ENCODE measurements at regions of chr14 and their contacts with region 1.

Region 1: GRCh38 chr14:49633640-49634546 is 1.2 kb downstream of the DNAAF2 start:
- DNase-seq: peak; percentile 94 to 96
- H3K4me3 ChIP-seq: peak overlapping the region; percentile 92
- H3K4me3 Mint-ChIP-seq: peak overlapping the region; percentile 93
- H3K27ac Mint-ChIP-seq: peak overlapping the region; percentile 99
- H3K4me1 ChIP-seq: peaks cover 14% of the 10 kb centered on the region
- H3K4me1 Mint-ChIP-seq: peaks cover 15% of the 10 kb centered on the region
- H3K27me3 ChIP-seq: no peaks in the 10 kb centered on the region
- H3K27me3 Mint-ChIP-seq: no peaks in the 10 kb centered on the region
- CTCF ChIP-seq: peak; percentile 81 to 86

Region 2: DNA sequence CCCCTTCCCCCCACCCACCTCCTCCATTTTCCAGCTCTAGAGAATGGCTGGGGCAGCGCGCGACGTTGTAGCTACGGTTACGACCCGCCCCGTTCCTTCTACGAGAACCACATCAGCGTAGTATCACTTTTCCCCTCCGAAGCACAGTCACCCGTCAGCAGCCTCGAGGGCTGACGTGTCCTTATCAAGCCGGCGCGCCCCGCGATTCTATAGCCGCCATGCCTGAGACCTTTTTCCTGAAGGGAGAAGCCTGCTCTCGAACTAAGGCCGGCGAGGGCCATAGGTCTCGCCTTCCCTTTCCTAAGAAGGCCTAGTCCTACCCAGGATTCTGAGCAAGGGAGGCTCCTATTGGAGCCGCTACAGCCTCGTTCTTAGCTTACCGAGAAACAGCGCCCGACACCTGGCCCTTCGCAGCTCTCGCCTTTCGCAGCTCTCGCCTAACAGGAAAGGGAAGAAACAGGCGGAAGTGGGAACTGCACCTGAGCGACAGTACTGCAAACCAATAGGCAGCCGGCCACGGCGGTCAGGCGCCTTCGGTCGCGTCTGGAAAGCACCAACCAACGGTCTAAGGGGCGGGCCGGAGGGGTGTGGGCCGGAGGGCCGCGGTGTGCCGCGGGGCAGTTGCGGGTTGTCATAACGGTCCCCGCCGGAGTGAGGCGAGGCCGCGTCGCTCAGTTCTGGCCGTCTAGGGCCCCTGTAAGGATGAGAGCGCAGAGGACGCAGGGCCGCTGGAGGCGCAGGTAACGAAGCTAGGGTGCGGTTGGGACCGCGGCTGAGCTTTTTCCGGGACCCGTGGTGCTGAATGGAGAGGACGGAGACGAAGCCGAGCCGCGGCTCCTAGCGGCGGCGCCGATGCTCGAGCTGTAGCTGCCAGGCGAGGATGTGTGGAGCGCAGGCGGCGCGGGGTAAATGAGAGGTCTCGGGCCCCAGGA is 13.4 kb before region 1 on chr14 and contains the starts of genes MGAT2 and RPL36AL:
- CTCF ChIA-PET with region 1: interaction called, 12 read pairs
- POLR2A ChIA-PET with region 1: interaction called, 28 read pairs
- intact Hi-C with region 1: loop called (anchors 1 kb)
- DNase-seq: peak; percentile 99
- H3K4me3 ChIP-seq: peak within 1 kb of the TSS; percentile 84
- H3K4me3 Mint-ChIP-seq: peak within 1 kb of the TSS; percentile 91
- H3K27ac Mint-ChIP-seq: peak within 1 kb of the TSS; percentile 93
- H3K4me1 ChIP-seq: peaks cover 27% of the 10 kb centered on the region
- H3K4me1 Mint-ChIP-seq: peaks cover 16% of the 10 kb centered on the region
- H3K27me3 ChIP-seq: no peaks in the 10 kb centered on the region
- H3K27me3 Mint-ChIP-seq: no peaks in the 10 kb centered on the region
- CTCF ChIP-seq: peak in 1 of 2 experiments; percentile 28
- total RNA-seq, gene MGAT2: 42.1 and 47.5 TPM in 2 replicates
- total RNA-seq, gene RPL36AL: 181 and 191 TPM in 2 replicates

Region 3: DNA sequence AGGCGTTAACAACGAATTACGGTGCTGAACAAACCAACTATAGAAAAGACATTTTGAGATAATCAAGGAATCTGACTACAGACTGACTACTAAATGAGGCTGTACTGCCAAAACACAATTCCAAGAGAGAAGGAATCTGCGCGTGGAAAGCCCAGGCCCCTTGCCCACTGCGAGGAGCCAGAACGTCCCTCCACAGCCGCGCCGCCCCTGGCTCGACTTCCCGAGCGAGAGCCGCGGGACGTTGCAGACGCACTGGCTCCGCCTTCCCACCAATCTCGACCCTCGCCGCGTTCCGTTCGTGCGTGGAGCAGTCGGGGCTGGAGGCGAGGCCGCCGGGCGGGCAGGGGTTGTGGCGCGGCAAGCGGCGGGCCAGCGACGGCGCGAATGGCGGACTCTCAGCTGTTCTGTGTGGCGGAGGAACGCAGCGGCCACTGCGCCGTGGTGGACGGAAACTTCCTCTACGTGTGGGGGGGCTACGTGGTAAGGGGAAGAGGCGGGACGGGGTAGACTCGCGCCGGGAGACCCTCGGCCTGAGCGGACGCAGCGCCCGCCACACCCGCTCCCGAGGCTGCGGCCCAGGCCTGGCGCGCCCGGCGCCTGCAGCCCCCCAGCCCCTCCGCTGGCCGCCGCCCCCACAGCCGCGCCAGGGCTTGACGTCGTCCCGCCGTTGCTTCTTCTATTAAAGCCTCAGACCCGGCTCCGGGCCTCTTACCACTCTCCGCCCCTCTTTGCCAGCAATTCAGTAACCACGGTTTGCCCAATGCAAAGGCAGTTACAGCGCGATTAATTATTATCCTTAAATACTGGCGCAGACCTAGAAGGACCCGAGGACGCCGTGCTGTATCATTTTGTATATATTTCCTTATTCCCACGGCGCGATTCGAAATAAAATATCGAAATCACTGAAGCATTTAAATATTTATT is 59.2 kb after region 1 on chr14 and contains the start of gene KLHDC1:
- CTCF ChIA-PET with region 1: interaction called, 12 read pairs
- POLR2A ChIA-PET with region 1: interaction called, 4 read pairs
- intact Hi-C with region 1: loop called (anchors 2 kb)
- DNase-seq: peak; percentile 78 to 80
- H3K4me3 ChIP-seq: peak within 1 kb of the TSS; percentile 87
- H3K4me3 Mint-ChIP-seq: peak within 1 kb of the TSS; percentile 75
- H3K27ac Mint-ChIP-seq: peak within 1 kb of the TSS; percentile 55
- H3K4me1 ChIP-seq: peaks cover 4% of the 10 kb centered on the region; the same call in 1 of the 2 replicates
- H3K4me1 Mint-ChIP-seq: peaks cover 23% of the 10 kb centered on the region
- H3K27me3 ChIP-seq: no peaks in the 10 kb centered on the region
- H3K27me3 Mint-ChIP-seq: no peaks in the 10 kb centered on the region
- CTCF ChIP-seq: no peak
- total RNA-seq, gene KLHDC1: 0.97 and 0.98 TPM in 2 replicates

Region 4: GRCh38 chr14:49720744-49721143 is 86.9 kb after region 1 on chr14:
- CTCF ChIA-PET with region 1: interaction called, 4 read pairs
- POLR2A ChIA-PET with region 1: no interaction called
- intact Hi-C with region 1: loop called (anchors 1 kb)
- DNase-seq: no peak
- H3K4me3 ChIP-seq: no peak overlapping the region
- H3K4me3 Mint-ChIP-seq: no peak overlapping the region
- H3K27ac Mint-ChIP-seq: no peak overlapping the region
- H3K4me1 ChIP-seq: no peaks in the 10 kb centered on the region
- H3K4me1 Mint-ChIP-seq: peaks cover 11% of the 10 kb centered on the region
- H3K27me3 ChIP-seq: no peaks in the 10 kb centered on the region
- H3K27me3 Mint-ChIP-seq: no peaks in the 10 kb centered on the region
- CTCF ChIP-seq: no peak

Region 5: DNA sequence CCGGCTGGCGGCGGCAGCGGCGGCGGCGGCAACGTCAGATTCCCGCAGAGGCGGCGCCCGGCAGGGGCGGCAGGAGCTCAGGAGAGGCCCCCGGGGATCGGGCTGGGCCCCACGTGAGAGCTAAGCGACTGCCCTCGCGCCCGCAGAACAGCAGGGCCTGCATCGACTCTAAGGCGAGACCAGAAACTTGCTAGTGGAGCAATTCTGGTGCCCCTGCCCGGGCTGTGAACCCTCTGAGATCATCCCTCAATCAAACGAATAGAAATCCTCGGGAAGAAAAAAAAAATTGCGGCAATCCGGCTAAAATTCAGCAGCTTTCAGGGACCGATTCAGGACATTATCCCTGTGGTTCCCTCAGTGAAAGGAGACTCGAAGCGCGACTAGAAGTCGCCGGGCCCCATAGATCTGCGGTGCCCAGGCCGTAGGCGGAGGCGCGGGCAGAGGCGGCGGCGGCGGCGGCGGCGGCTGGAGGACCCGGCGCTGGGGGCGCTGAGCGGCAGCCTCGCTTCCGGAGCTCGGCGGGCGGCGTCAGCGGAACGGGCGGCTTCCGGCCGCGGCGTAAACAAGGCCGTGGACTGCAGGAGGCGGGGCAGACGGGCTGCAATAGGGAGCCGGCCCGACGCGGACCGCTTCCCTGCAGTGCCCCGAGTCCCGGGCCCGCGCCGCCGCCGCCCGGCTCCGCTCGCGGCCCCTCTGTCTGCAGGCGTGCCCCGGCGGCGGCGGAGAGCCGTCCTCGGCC is 133.8 kb after region 1 on chr14 and contains the start of gene KLHDC2:
- CTCF ChIA-PET with region 1: interaction called, 23 read pairs
- POLR2A ChIA-PET with region 1: interaction called, 22 read pairs
- intact Hi-C with region 1: loop called (anchors 1 kb)
- DNase-seq: peak; percentile 88 to 94
- H3K4me3 ChIP-seq: peak within 1 kb of the TSS; percentile 99
- H3K4me3 Mint-ChIP-seq: peak within 1 kb of the TSS; percentile 79
- H3K27ac Mint-ChIP-seq: peak within 1 kb of the TSS; percentile 79
- H3K4me1 ChIP-seq: peaks cover 35% of the 10 kb centered on the region
- H3K4me1 Mint-ChIP-seq: peaks cover 10% of the 10 kb centered on the region
- H3K27me3 ChIP-seq: no peaks in the 10 kb centered on the region
- H3K27me3 Mint-ChIP-seq: no peaks in the 10 kb centered on the region
- CTCF ChIP-seq: no peak
- total RNA-seq, gene KLHDC2: 76.5 and 89.4 TPM in 2 replicates

Region 6: DNA sequence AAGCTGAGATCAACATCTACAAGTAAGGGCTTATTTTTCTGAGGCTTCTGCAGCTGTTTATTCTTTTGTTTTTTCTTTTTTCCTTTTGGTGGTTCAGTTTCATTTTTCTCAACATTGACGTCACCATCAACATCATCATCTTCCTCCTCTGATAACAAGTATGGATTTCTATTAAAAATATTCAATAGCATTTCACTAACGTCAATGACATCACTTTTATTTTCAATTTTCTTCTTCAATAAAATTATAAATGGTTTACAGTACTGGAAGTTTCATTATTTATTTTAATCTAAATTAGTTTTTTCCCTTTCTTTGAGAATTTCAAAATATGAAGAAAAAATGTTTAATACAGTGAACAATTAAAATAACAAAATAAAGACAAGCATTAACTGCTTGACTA is 194.7 kb after region 1 on chr14:
- CTCF ChIA-PET with region 1: interaction called, 6 read pairs
- POLR2A ChIA-PET with region 1: no interaction called
- intact Hi-C with region 1: loop called (anchors 1 kb)
- DNase-seq: no peak
- H3K4me3 ChIP-seq: no peak overlapping the region
- H3K4me3 Mint-ChIP-seq: no peak overlapping the region
- H3K27ac Mint-ChIP-seq: no peak overlapping the region
- H3K4me1 ChIP-seq: no peaks in the 10 kb centered on the region
- H3K4me1 Mint-ChIP-seq: no peaks in the 10 kb centered on the region
- H3K27me3 ChIP-seq: no peaks in the 10 kb centered on the region
- H3K27me3 Mint-ChIP-seq: no peaks in the 10 kb centered on the region
- CTCF ChIP-seq: no peak

Region 7: DNA sequence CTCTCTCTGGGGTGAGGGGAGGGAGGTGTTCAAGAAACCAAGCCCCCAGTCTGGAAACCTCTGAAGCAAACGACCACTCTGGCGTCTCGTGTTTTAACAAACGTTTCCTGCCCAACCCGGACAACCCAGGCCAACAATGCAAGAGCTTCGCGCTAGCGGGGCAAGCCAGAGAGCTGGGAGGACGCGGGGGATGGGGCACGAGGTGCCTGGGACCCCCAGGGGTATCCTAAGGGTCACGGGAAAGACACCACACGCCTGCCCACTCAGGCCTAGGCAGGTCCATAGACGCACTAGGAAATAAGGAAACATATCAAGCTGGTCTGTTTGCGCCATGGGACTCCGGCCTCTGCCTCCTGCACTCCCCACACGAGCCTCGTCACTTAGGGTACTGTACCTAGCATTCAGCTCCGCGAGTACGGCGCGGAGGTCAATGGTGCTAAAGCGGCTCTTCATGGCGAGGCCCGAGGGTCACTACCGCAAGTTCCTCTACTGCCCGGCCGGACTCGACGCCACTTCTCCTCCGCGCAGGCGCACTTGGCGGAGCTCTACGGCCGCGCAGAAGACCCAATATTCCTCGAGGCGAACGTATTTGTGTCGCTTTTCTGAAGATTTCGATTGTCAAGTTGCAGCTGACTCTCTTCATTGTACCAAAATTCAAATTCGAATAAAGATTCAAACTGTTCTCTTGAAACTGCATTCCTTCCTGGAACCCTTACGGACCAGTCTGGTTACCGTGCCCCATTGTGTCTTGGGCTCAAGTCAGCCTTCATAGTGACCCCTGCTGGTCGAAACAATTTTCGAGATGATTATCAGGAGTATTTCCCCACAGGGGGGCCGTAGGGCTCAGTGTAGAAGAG is 218.6 kb after region 1 on chr14 and contains the start of gene NEMF:
- CTCF ChIA-PET with region 1: interaction called, 11 read pairs
- POLR2A ChIA-PET with region 1: interaction called, 6 read pairs
- intact Hi-C with region 1: loop called (anchors 5 kb)
- DNase-seq: peak; percentile 86 to 92
- H3K4me3 ChIP-seq: peak within 1 kb of the TSS; percentile 84
- H3K4me3 Mint-ChIP-seq: peak within 1 kb of the TSS; percentile 100
- H3K27ac Mint-ChIP-seq: peak within 1 kb of the TSS; percentile 99
- H3K4me1 ChIP-seq: peaks cover 9% of the 10 kb centered on the region; the same call in 1 of the 2 replicates
- H3K4me1 Mint-ChIP-seq: peaks cover 6% of the 10 kb centered on the region
- H3K27me3 ChIP-seq: no peaks in the 10 kb centered on the region
- H3K27me3 Mint-ChIP-seq: no peaks in the 10 kb centered on the region
- CTCF ChIP-seq: peak; percentile 73 to 85
- total RNA-seq, gene NEMF: 57.4 and 62.7 TPM in 2 replicates

Measured in Caco-2 (cell line).